Activated CD4-positive, alpha-beta memory T cell treated with anti-CD3 and anti-CD28 coated beads for 36 hours (primary cell): ENCODE measurements at regions of chr6 and their contacts with region 1.

Region 1: DNA sequence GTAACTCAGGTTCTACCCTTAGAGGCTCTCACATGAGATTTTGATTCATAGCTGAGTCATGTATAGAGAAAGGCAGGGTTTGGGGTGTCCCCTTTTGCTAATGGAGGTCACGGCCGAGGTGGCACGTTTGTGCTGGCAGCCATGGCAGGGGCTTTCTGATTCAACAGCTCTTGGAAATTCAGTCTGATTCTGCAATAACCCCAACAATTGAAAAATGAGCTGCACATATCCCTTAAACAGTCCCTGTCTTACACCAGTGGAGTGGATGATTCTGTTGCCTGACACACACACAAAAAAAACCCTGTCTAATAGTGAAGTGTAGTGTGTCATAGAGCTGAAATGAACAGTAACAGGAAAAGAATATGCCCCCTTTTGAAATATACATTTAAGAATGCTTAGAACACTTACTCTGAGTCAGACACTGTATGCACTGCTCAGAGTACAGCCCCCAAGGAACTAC is 40.4 kb upstream of the ARG1 start:
- DNase-seq: peak; percentile 82
- H3K4me3 Mint-ChIP-seq: no peak overlapping the region
- H3K27ac Mint-ChIP-seq: peak overlapping the region; percentile 76
- H3K4me1 Mint-ChIP-seq: peaks cover 42% of the 10 kb centered on the region
- H3K27me3 Mint-ChIP-seq: no peaks in the 10 kb centered on the region

Region 2: DNA sequence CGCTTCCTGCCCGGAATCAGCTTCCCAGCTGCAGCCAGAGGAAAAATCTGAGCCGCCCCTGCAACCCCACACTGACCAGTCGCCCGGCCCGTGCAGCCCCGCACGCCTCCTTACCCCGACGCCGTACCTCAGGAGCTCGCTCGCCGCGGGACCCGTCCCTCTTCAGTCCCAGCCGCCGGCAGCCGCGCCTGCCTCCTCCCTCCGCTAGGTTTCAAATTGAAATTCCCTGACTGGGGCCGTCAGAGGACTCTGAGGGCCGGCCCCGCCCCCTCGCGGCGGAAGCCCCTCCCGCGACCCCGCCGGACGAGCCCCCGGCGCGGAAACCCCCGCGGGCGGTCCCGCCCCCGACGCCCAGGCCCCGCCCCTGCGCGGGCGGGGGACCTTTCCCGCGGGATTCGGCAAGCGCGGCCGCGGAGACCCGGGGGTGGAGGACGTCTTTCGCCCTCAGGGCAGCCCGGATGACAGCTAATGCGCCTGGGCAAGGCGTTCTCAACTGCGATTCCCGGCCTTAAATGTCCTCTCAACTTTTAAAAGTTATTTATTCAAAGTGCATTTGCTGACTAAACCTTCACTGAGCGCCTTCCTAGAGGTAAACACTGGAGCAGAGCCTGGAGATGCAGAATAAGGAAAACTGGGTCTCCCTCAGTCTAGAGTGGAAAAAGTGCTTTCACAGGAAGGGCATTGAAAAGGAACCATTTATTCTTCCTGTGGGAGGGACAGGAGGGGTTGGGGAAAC is 469.4 kb before region 1 on chr6 and contains the start of gene EPB41L2:
- CTCF ChIA-PET with region 1: interaction called, 4 read pairs
- POLR2A ChIA-PET with region 1: no interaction called
- intact Hi-C with region 1: loop called (anchors 5 kb)
- DNase-seq: peak; percentile 85
- H3K4me3 Mint-ChIP-seq: peak within 1 kb of the TSS; percentile 80
- H3K27ac Mint-ChIP-seq: no peak within 1 kb of the TSS
- H3K4me1 Mint-ChIP-seq: peaks cover 27% of the 10 kb centered on the region
- H3K27me3 Mint-ChIP-seq: no peaks in the 10 kb centered on the region
- total RNA-seq, gene EPB41L2: 30.4 to 37.8 TPM

Region 3: GRCh38 chr6:131135244-131136020 is 397.2 kb before region 1 on chr6 and contains the start of gene AKAP7:
- CTCF ChIA-PET with region 1: no interaction called
- POLR2A ChIA-PET with region 1: no interaction called
- intact Hi-C with region 1: loop called (anchors 1 kb)
- DNase-seq: peak; percentile 72
- H3K4me3 Mint-ChIP-seq: peak within 1 kb of the TSS; percentile 79
- H3K27ac Mint-ChIP-seq: peak within 1 kb of the TSS; percentile 83
- H3K4me1 Mint-ChIP-seq: peaks cover 14% of the 10 kb centered on the region
- H3K27me3 Mint-ChIP-seq: peaks cover 2% of the 10 kb centered on the region
- total RNA-seq, gene AKAP7: 4.0 to 4.3 TPM

Region 4: GRCh38 chr6:131205481-131206244 is 326.9 kb before region 1 on chr6:
- CTCF ChIA-PET with region 1: interaction called, 77 read pairs
- POLR2A ChIA-PET with region 1: interaction called, 11 read pairs
- intact Hi-C with region 1: no loop called
- DNase-seq: no peak
- H3K4me3 Mint-ChIP-seq: no peak overlapping the region
- H3K27ac Mint-ChIP-seq: no peak overlapping the region
- H3K4me1 Mint-ChIP-seq: peaks cover 58% of the 10 kb centered on the region
- H3K27me3 Mint-ChIP-seq: no peaks in the 10 kb centered on the region

Region 5: DNA sequence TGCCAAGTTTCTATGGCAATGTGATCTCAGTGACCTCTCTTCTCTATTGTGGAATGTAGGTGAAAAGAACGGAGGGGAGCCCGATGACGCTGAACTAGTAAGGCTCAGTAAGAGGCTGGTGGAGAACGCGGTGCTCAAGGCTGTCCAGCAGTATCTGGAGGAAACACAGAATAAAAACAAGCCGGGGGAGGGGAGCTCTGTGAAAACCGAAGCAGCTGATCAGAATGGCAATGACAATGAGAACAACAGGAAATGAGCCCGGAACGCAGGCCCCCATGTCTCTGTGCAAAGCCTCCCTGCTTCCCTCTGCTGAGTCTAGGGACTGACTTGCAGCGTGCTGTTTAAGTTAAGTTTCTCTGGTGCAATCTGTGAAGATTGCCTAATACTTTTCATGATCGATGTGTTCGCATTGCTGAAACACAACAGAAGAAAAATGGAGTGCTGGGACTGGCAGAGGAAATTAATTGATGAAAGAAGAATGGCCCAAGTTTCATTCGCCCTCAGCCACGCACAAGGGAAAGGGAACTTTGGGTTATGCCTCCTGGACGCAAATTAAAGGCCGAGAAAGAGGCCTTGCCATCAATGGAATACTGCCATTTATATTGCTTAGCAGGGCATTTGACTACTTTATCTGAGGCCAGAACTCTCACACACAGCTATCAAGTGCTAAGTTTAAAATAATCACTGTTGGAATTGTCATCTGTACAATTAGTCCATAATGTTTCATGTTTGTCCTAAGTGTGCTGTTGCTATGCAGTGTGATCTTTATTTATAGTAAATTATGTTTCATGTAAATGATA is 250.9 kb before region 1 on chr6:
- CTCF ChIA-PET with region 1: no interaction called
- POLR2A ChIA-PET with region 1: no interaction called
- intact Hi-C with region 1: no loop called
- DNase-seq: peak; percentile 77
- H3K4me3 Mint-ChIP-seq: peak overlapping the region; percentile 71
- H3K27ac Mint-ChIP-seq: peak overlapping the region; percentile 89
- H3K4me1 Mint-ChIP-seq: peaks cover 22% of the 10 kb centered on the region
- H3K27me3 Mint-ChIP-seq: no peaks in the 10 kb centered on the region

Region 6: GRCh38 chr6:131460614-131461000 is 72.0 kb before region 1 on chr6:
- CTCF ChIA-PET with region 1: no interaction called
- POLR2A ChIA-PET with region 1: no interaction called
- intact Hi-C with region 1: no loop called
- DNase-seq: no peak
- H3K4me3 Mint-ChIP-seq: no peak overlapping the region
- H3K27ac Mint-ChIP-seq: no peak overlapping the region
- H3K4me1 Mint-ChIP-seq: peaks cover 4% of the 10 kb centered on the region
- H3K27me3 Mint-ChIP-seq: no peaks in the 10 kb centered on the region

Region 7: GRCh38 chr6:131519670-131520436 is 12.8 kb before region 1 on chr6:
- CTCF ChIA-PET with region 1: interaction called, 65 read pairs
- POLR2A ChIA-PET with region 1: no interaction called
- intact Hi-C with region 1: loop called (anchors 1 kb)
- DNase-seq: peak; percentile 60
- H3K4me3 Mint-ChIP-seq: no peak overlapping the region
- H3K27ac Mint-ChIP-seq: no peak overlapping the region
- H3K4me1 Mint-ChIP-seq: peaks cover 12% of the 10 kb centered on the region
- H3K27me3 Mint-ChIP-seq: peaks cover 2% of the 10 kb centered on the region